ENCODE measurements at regions of chr15 and their contacts with region 1.

Region 1: DNA sequence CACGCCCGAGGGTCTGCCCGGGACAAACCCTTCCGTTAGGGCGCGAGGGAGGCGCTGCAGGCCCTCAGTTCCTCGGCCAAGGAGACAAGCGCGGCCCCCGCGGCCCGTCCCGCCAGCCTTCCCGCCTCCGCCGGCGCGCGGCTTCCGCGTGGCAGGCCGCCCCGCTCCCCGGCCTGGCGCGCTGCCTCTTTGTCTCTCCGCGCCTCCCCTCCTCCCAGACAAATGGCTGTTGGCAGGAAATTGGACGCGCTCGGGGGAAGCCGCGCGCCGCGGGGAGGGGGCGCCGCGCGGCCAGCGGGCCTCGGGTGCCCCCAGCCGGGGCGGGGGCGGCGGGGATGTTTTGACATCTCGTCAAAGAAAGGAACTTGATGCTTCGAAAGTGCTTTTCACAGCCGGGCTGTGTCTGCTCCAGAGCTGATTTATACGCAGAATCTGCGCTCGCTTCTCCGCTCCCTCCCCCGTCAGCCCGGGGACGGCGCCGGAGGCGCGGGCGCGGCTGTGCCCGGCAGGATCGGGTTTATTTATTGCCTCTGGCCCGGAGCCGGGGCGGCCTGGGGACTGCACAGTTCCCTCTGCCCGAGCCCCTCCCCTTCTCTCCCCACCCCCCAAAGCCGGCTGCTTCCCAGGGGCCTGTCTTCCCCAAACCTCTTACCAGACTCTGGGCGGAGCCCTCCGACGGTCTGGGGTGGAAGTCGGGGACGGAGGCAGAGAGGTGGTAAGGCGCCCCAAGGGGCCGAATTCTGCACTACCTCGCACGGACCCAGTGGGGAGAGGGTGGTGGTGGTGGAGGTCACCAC is 20.7 kb downstream of the SHF start:
- DNase-seq: peak; percentile 86
- H3K4me3 Mint-ChIP-seq: peak overlapping the region; percentile 70
- H3K27ac Mint-ChIP-seq: peak overlapping the region; percentile 80
- H3K4me1 Mint-ChIP-seq: peaks cover 21% of the 10 kb centered on the region
- H3K27me3 Mint-ChIP-seq: no peaks in the 10 kb centered on the region

Region 2: DNA sequence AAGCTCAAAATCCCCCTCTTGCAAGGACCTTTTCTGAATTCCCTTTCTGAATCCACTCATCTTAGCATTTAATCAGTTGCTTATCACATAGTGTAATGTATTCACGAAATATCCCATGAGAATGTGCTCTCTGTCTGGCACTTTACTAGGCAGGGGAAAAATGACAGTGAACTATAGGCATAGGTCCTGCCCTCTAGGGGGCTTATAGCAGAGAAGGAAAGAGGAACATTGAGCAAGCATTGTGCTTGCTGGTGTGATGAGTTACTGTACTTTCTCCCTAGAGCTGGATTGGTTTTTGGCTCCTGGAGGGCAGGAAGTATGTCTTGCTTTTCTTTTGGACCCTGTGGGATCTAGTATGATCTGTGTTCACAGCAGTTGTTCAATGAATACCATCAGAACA is 79.5 kb before region 1 on chr15:
- CTCF ChIA-PET with region 1: no interaction called
- DNase-seq: no peak
- H3K4me3 Mint-ChIP-seq: no peak overlapping the region
- H3K27ac Mint-ChIP-seq: no peak overlapping the region
- H3K4me1 Mint-ChIP-seq: no peaks in the 10 kb centered on the region
- H3K27me3 Mint-ChIP-seq: peaks cover 33% of the 10 kb centered on the region

Region 3: GRCh38 chr15:45126535-45127158 is 40.4 kb before region 1 on chr15:
- CTCF ChIA-PET with region 1: interaction called, 14 read pairs
- DNase-seq: peak; percentile 57
- H3K4me3 Mint-ChIP-seq: no peak overlapping the region
- H3K27ac Mint-ChIP-seq: no peak overlapping the region
- H3K4me1 Mint-ChIP-seq: peaks cover 4% of the 10 kb centered on the region
- H3K27me3 Mint-ChIP-seq: peaks cover 82% of the 10 kb centered on the region

Region 4: DNA sequence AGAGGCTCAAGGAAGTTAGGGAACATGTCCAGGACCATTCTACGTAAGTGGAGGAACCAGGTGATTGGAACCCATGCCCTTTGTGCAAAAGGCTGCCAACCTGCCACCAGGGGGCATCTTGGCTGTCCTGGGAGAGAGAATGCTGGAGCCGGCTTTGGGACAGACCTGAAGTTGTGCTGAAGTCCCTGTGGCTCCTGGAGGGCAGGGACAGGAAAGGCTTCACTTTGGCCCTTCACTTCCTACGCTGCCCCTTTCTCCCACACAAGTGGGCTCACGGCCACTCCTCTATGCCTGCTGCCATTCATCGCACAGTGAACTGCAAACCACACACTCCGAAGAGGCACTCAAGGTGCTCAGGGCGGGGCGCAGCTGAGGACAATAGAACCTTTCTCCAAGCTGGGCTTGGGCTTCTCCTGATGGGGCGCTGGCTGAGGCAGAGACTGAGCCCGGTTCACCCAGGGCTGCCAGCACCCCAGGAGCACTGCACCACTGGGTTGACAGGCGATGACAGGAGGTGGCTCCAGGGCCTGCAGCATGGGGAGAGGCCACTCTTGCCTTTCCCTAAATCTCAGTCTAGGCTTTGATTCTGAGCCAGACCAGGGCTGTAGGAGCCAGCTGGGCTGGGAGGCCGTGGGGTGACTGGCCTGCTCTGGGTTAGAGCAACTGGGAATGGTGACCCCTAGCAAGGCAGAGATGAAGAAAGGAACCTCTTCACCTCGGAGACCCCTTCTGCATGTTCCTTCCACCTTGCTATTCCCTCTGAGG is 12.4 kb after region 1 on chr15:
- CTCF ChIA-PET with region 1: interaction called, 15 read pairs
- DNase-seq: peak; percentile 48
- H3K4me3 Mint-ChIP-seq: no peak overlapping the region
- H3K27ac Mint-ChIP-seq: no peak overlapping the region
- H3K4me1 Mint-ChIP-seq: peaks cover 8% of the 10 kb centered on the region
- H3K27me3 Mint-ChIP-seq: peaks cover 4% of the 10 kb centered on the region

Region 5: DNA sequence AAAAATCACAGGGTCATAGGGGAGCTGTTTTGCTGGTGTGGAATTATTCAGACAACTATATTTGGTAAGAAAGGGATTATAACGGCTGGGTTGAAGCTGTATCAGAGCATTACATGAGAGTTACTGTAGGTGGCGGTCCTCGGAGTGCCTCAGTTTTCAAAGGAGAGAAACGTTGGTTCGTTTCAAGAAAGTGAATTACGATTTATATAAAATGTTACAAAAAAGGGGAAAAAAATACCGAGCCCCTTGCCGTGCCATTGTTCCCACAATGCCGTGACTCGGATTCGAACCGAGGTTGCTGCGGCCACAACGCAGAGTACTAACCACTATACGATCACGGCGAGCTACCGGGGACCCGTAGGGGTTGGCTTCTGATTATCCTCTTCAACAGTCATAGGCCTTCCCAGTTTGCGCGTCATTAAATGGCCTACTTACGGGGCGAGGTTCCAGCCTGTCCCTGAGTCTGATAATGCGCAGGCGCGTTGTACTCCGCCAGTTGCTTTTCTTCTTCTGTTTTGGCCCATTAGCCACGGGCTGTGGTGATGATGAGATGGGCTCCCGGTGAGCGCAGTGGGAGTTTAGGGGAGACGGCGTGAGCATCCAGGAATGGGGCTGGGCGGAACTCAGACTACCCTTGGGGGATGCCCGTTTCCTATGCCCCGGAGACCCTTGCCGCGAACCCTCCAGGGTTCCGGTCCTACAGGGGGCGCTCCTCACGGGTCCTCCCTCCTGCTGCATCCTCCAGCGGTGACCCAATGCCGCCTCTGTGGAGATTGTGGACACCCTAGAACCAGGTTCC is 31.5 kb after region 1 on chr15:
- CTCF ChIA-PET with region 1: interaction called, 151 read pairs
- DNase-seq: peak; percentile 96
- H3K4me3 Mint-ChIP-seq: no peak overlapping the region
- H3K27ac Mint-ChIP-seq: no peak overlapping the region
- H3K4me1 Mint-ChIP-seq: peaks cover 11% of the 10 kb centered on the region
- H3K27me3 Mint-ChIP-seq: peaks cover 27% of the 10 kb centered on the region

Region 6: DNA sequence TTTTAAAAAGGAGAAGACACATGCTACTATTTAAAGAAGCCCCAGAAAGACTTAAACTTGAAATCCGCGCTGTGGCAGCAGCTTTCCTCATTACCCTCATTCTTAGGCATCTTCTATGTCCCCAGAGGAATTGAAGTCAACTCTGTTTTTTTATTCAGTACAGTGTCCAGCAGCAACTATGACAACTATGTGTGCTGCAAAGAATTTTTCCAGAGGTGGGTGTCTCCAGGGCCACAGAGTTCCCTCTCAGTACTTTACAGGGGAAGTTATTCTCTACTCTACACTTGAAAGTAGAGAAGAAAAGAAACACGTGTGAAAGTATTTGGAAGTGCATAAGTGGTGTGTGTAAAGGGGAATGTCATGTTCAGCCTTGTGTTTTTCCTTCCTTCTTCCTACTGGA is 179.3 kb after region 1 on chr15:
- CTCF ChIA-PET with region 1: no interaction called
- DNase-seq: no peak
- H3K4me3 Mint-ChIP-seq: no peak overlapping the region
- H3K27ac Mint-ChIP-seq: no peak overlapping the region
- H3K4me1 Mint-ChIP-seq: no peaks in the 10 kb centered on the region
- H3K27me3 Mint-ChIP-seq: peaks cover 40% of the 10 kb centered on the region

Region 7: DNA sequence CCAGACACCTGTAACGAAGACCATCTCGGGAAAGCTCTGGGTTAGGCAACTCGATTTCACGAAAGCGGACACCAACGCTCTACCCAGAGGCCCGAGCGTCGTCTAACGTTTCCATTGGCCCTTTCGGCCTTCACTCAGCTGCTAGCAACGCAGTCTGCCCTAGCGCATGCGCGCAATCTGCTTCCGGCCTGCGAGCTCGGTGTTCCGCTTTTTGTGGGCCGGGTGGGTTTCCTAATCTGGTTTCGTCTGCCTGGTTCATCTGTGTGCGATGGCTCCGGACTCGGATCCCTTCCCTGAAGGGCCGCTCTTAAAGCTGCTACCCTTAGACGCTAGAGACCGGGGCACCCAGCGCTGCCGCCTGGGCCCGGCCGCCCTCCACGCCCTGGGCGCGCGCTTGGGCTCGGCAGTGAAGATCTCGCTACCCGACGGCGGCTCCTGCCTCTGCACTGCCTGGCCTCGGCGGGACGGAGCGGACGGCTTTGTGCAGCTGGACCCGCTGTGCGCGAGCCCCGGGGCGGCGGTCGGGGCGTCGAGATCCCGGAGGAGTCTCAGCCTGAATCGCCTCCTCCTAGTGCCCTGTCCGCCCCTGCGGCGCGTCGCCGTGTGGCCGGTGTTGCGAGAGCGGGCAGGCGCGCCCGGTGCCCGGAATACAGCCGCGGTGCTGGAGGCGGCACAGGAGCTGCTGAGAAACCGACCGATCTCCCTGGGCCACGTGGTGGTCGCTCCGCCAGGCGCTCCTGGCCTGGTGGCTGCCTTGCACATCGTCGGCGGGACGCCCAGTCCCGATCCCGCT is 235.3 kb after region 1 on chr15:
- CTCF ChIA-PET with region 1: interaction called, 25 read pairs
- DNase-seq: peak; percentile 97
- H3K4me3 Mint-ChIP-seq: peak overlapping the region; percentile 97
- H3K27ac Mint-ChIP-seq: peak overlapping the region; percentile 94
- H3K4me1 Mint-ChIP-seq: peaks cover 42% of the 10 kb centered on the region
- H3K27me3 Mint-ChIP-seq: no peaks in the 10 kb centered on the region

Region 8: GRCh38 chr15:45457641-45458433 is 290.8 kb after region 1 on chr15:
- CTCF ChIA-PET with region 1: interaction called, 12 read pairs
- DNase-seq: peak; percentile 82
- H3K4me3 Mint-ChIP-seq: peak overlapping the region; percentile 72
- H3K27ac Mint-ChIP-seq: peak overlapping the region; percentile 86
- H3K4me1 Mint-ChIP-seq: peaks cover 52% of the 10 kb centered on the region
- H3K27me3 Mint-ChIP-seq: peaks cover 5% of the 10 kb centered on the region

Measured in activated naive CD4-positive, alpha-beta T cell treated with anti-CD3 and anti-CD28 coated beads, Interleukin-2, amount 10 ng/mL, durations not matched to agents 7 days and 5 days (primary cell).